Vagina (tissue), 2 donors: ENCODE measurements at regions of chr3 and their contacts with region 1.

Region 1: DNA sequence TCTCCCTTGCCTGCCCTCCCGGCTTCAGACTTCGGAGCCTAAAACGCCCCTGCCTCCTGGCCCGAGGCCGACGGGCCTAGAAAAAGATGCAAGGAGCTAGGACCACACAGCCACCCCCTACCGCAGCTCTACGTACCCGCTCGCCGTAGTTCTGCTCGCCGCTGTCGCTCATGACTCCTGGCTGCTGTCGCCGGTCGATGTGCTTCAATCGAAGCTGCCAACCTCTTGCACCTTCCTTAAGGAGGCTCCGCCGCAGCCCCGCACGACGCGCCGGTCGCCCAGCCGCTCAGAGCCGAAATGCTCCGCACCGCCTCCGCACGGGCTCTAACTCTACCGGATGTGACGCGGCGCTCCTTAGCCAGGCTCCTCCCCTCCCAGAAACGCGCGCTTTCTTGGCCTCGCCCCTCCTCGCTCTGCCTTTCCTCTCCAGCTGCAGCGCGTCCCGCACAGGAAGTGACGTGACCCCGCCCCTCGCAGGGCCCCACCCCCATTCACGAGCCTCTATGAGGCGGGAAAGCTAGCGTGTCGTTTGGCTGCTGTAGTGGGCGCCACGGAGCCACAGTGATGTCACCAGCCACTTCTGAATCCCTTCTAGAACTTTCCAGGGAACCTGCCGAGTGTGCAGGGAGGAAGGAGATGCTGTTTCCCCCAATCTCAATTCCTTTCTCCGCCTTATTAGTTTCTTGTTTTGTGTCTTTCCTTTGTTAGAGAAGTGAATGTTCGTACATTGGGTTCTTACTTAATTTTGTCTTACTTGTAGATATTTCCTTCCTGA is at the start of gene TRA2B:
- DNase-seq: peak; percentile 99
- H3K4me3 ChIP-seq: peak within 1 kb of the TSS; percentile 90 to 92
- H3K27ac ChIP-seq: peak within 1 kb of the TSS; percentile 99
- H3K4me1 ChIP-seq: peaks cover 29% of the 10 kb centered on the region
- H3K27me3 ChIP-seq: no peaks in the 10 kb centered on the region
- CTCF ChIP-seq: no peak
- POLR2A ChIP-seq: peak; percentile 94 to 100
- total RNA-seq, gene TRA2B: 145 TPM

Region 2: DNA sequence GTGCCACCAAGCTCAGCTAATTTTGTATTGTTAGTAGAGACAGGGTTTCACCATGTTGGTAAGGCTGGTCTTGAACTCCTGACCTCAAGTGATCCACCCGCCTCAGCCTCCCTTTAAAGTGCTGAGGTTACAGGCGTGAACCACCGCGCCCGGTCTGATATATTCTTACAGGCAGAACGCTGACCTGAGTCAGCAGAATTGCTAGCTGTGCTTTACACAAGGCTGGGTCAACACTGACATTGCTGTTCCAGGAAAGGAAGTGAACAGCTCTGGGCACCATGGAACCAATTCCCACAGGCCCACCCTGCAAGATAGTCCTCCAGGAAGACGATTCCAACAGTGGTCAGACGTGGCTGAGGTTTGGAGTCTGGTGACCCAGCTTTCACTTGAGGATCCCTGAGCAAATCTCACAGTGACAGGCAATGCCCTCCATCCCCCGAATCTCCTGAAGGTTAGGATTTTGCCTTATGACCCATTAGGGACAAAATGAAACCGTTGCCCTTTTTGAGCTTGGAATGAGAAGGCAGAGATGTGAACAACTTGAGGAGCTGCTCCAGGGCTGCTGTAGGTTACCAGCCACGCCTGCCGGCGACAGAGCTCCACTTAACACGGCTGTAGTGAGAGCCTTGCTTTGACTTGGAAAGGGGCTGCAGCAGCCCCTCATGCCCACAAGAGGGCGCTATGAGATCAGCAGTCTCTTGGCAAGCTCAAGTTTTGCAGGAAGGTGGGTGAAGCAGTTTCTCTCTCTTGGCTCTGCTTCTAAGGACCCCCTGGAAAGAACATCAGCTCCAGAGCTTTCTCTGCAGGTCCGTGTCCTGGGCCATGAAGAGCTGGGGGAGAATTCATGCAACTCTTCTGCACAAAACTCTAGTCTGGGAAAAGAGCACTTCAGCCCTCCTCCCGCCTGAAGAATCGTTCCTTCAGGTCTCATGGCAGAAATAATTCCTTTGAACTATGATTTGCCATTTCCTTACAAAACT is 277.6 kb before region 1 on chr3:
- intact Hi-C with region 1: loop called (anchors 2 kb)
- DNase-seq: peak in 1 of 2 donors; percentile 87
- H3K4me3 ChIP-seq: no peak overlapping the region
- H3K27ac ChIP-seq: peak overlapping the region; percentile 94
- H3K4me1 ChIP-seq: peaks cover 53% of the 10 kb centered on the region
- H3K27me3 ChIP-seq: no peaks in the 10 kb centered on the region
- CTCF ChIP-seq: peak; percentile 88 to 93 (median 91)
- POLR2A ChIP-seq: no peak

Region 3: GRCh38 chr3:186381424-186382216 is 443.7 kb after region 1 on chr3:
- intact Hi-C with region 1: no loop called
- DNase-seq: no peak
- H3K4me3 ChIP-seq: no peak overlapping the region
- H3K27ac ChIP-seq: no peak overlapping the region
- H3K4me1 ChIP-seq: no peaks in the 10 kb centered on the region
- H3K27me3 ChIP-seq: no peaks in the 10 kb centered on the region
- CTCF ChIP-seq: no peak
- POLR2A ChIP-seq: no peak

Region 4: GRCh38 chr3:186783073-186783730 is 845.3 kb after region 1 on chr3 and contains the start of gene EIF4A2:
- intact Hi-C with region 1: loop called (anchors 5 kb)
- DNase-seq: peak in 1 of 2 donors; percentile 94
- H3K4me3 ChIP-seq: peak within 1 kb of the TSS; percentile 60 to 76
- H3K27ac ChIP-seq: peak within 1 kb of the TSS; percentile 99
- H3K4me1 ChIP-seq: peaks cover 40% of the 10 kb centered on the region
- H3K27me3 ChIP-seq: no peaks in the 10 kb centered on the region
- CTCF ChIP-seq: peak in 1 of 3 experiments; percentile 7
- POLR2A ChIP-seq: peak in 1 of 2 donors; percentile 86
- total RNA-seq, gene EIF4A2: 375 TPM